ENCODE measurements at regions of chr15 and their contacts with region 1.

Region 1: DNA sequence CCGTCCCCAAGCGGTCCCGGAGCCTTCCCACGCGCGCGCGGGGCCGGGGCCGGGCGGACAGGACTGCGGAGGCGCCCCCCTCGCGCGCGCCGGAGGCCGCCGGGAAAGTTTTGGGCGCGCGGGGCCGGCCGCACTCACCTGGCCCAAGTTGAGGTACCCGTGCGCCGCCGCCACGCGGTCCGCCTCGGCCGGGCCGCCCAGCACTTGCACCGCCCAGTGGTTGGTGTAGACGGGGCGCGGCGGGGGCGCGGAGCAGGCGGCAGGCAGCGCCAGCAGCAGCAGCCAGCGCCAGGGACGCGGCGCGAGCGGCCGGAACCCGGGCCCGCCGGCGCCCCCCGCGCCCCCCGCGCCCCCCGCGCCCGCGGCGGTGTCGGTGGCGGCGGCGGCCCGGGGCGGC is 273 bp downstream of the PCSK6 start:
- DNase-seq: peak in 1 of 2 experiments; percentile 65
- H3K4me3 ChIP-seq: peak overlapping the region; percentile 42; the same call in 1 of the 2 replicates
- H3K27ac ChIP-seq: no peak overlapping the region
- H3K4me1 ChIP-seq: peaks cover 30% of the 10 kb centered on the region
- H3K27me3 ChIP-seq: no peaks in the 10 kb centered on the region
- CTCF ChIP-seq: no peak

Region 2: DNA sequence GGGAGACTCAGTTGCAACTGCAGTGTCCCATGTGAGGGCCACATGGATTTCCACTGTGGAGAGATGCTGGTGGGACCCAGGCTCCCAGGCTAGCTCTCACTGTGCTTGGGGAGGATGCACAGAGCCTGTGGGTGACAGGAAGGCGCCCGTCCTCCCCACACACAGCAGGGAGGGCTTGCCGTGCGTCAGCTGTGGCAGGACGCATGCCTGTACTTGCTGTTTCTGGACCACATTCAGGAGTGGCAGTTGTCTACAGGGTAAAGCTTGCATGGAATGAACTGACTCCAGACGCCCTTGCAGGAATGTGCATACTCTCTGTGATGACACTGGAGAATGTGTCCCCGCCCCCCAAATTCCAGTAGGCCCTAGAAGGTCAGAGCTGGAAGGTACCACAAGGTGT is 130.3 kb before region 1 on chr15:
- CTCF ChIA-PET with region 1: interaction called, 10 read pairs
- POLR2A ChIA-PET with region 1: no interaction called
- intact Hi-C with region 1: no loop called
- DNase-seq: peak in 1 of 2 experiments; percentile 6
- H3K4me3 ChIP-seq: no peak overlapping the region
- H3K27ac ChIP-seq: no peak overlapping the region
- H3K4me1 ChIP-seq: no peaks in the 10 kb centered on the region
- H3K27me3 ChIP-seq: no peaks in the 10 kb centered on the region
- CTCF ChIP-seq: no peak

Region 3: DNA sequence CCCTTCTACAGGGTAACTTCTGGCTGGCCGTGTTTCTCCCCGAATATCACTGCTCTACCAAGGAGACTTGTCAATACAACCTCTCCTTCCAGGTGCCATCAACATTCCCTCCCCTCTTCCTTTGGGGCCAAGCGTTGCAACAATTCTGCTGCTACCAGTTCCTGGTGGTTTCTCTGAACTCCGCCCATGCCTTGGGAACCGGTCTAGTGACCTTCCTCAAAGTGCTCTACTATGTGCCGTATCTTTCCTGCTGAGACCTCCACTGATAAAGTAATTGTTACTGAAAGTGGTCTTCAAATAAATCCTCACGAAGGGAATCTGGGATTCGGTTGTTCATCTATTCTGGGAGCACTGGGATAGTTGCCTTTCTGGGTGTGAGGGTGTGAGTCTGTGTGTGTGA is 25.9 kb before region 1 on chr15:
- CTCF ChIA-PET with region 1: no interaction called
- POLR2A ChIA-PET with region 1: no interaction called
- intact Hi-C with region 1: loop called (anchors 1 kb)
- DNase-seq: peak; percentile 78 to 79
- H3K4me3 ChIP-seq: peak overlapping the region; percentile 17; the same call in 1 of the 2 replicates
- H3K27ac ChIP-seq: peak overlapping the region; percentile 75
- H3K4me1 ChIP-seq: peaks cover 43% of the 10 kb centered on the region
- H3K27me3 ChIP-seq: no peaks in the 10 kb centered on the region
- CTCF ChIP-seq: no peak